CD8-positive, alpha-beta T cell (primary cell): ENCODE measurements at regions of chr9 and their contacts with region 1.

Region 1: DNA sequence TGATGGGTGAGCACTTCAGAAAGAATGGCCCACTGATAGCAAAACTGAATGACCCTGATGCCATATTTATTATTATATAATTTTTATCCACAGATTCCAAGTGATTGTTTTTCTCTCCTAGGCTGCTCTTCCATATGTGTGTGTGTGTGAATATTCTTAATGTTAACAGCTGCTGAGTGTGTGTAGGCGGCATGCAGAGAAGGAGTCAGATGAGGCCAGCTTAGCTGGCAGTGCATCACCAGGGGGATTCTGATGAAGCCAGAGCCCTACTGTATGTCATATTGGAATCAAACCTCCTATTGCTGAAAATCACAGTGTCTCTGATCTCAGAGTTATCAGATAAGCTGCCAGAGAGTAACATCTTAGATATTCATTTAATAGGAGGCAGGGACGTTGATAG is 177.1 kb downstream of the DMAC1 start:
- DNase-seq: no peak
- ATAC-seq: no peak
- H3K4me3 ChIP-seq: no peak overlapping the region
- H3K4me3 Mint-ChIP-seq: no peak overlapping the region
- H3K27ac ChIP-seq: no peak overlapping the region
- H3K27ac Mint-ChIP-seq: no peak overlapping the region
- H3K4me1 ChIP-seq: peaks cover 15% of the 10 kb centered on the region
- H3K4me1 Mint-ChIP-seq: peaks cover 23% of the 10 kb centered on the region
- H3K27me3 ChIP-seq: no peaks in the 10 kb centered on the region
- H3K27me3 Mint-ChIP-seq: no peaks in the 10 kb centered on the region
- CTCF ChIP-seq: no peak

Region 2: GRCh38 chr9:7935681-7936080 is 313.2 kb after region 1 on chr9:
- CTCF ChIA-PET with region 1: no interaction called
- POLR2A ChIA-PET with region 1: no interaction called
- intact Hi-C with region 1: loop called in 1 of 2 experiments (anchors 10 kb)
- DNase-seq: peak in 3 of 9 experiments; percentile 9 to 79 (median 59)
- ATAC-seq: peak; percentile 97
- H3K4me3 ChIP-seq: peak overlapping the region in 1 of 2 experiments; percentile 7
- H3K4me3 Mint-ChIP-seq: peak overlapping the region; percentile 69
- H3K27ac ChIP-seq: peak overlapping the region; percentile 34 to 51
- H3K27ac Mint-ChIP-seq: peak overlapping the region; percentile 95
- H3K4me1 ChIP-seq: peaks cover 25% of the 10 kb centered on the region
- H3K4me1 Mint-ChIP-seq: peaks cover 35% of the 10 kb centered on the region
- H3K27me3 ChIP-seq: no peaks in the 10 kb centered on the region
- H3K27me3 Mint-ChIP-seq: no peaks in the 10 kb centered on the region
- CTCF ChIP-seq: no peak